Psoas muscle (tissue), 8 donors: ENCODE measurements at regions of chr10 and their contacts with region 1.

Region 1: GRCh38 chr10:31855033-31855432 is 73.6 kb downstream of the ARHGAP12 start:
- DNase-seq: no peak
- ATAC-seq: no peak
- H3K4me3 ChIP-seq: no peak overlapping the region
- H3K27ac ChIP-seq: no peak overlapping the region
- H3K4me1 ChIP-seq: no peaks in the 10 kb centered on the region
- H3K27me3 ChIP-seq: no peaks in the 10 kb centered on the region
- CTCF ChIP-seq: no peak

Region 2: GRCh38 chr10:32005050-32005449 is 150.0 kb after region 1 on chr10:
- intact Hi-C with region 1: loop called in 1 of 2 experiments (anchors 5 kb)
- DNase-seq: no peak
- ATAC-seq: peak; percentile 44 to 66 (median 54)
- H3K4me3 ChIP-seq: no peak overlapping the region
- H3K27ac ChIP-seq: no peak overlapping the region
- H3K4me1 ChIP-seq: peaks cover 15% of the 10 kb centered on the region
- H3K27me3 ChIP-seq: no peaks in the 10 kb centered on the region
- CTCF ChIP-seq: peak; percentile 47